Naive thymus-derived CD4-positive, alpha-beta T cell (primary cell): ENCODE measurements at regions of chrX and their contacts with region 1.

Region 1: GRCh38 chrX:72126539-72127140 is 5.1 kb downstream of the RTL5 start:
- DNase-seq: peak; percentile 56 to 83 (median 67)
- ATAC-seq: peak; percentile 87
- H3K4me3 ChIP-seq: no peak overlapping the region
- H3K4me3 Mint-ChIP-seq: no peak overlapping the region
- H3K27ac ChIP-seq: no peak overlapping the region
- H3K27ac Mint-ChIP-seq: no peak overlapping the region
- H3K4me1 ChIP-seq: peaks cover 3 to 42% of the 10 kb centered on the region in 2 donors
- H3K4me1 Mint-ChIP-seq: peaks cover 0 to 34% (median 3%) of the 10 kb centered on the region in 7 donors
- H3K27me3 ChIP-seq: no peaks in the 10 kb centered on the region
- H3K27me3 Mint-ChIP-seq: peaks cover 0 to 63% (median 7%) of the 10 kb centered on the region in 5 donors

Region 2: DNA sequence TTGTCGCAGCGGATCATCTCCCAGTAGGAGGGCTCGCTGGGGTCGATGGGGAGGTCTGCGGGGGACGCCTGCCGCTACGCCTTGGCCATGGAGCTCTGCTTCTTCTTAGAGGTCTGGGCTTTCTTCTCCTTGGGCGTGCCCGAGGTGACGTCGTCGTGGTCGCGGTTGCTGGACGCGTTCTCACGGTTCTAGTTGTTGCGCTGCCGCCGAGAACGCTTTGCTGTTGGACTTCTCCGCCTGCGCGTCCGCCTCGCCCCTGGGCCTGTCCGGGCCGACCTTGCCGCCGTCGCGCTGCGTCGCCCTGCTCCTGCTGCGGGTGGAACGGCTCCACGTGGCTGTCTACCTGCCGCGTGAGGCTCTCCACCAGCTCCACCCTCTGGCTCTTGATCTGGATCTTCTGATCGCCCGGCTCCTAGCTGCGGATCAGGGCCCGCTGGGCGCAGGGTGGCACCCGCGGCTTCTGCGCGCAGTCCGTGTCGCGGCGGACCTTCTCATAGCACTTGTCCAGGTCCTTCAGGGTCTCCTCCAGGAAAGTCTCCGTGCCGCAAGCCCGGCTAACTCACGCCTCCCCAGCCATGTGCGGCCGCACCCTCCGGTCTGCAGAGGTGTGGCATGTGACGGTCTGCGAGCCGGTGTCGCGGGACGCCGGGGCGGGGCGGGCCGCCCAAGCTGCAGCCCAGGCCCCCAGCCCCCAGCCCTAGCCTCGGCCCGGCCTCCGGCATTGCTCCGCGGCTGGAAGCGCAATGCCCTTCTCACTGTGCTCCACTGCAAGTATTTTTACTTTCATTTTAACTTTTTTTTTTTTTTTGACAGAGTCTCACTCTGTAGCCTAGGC is 634.2 kb before region 1 on chrX:
- CTCF ChIA-PET with region 1: no interaction called
- POLR2A ChIA-PET with region 1: no interaction called
- intact Hi-C with region 1: no loop called
- DNase-seq: peak; percentile 16 to 53 (median 43)
- ATAC-seq: peak; percentile 86
- H3K4me3 ChIP-seq: peak overlapping the region; percentile 68
- H3K4me3 Mint-ChIP-seq: peak overlapping the region; percentile 79 to 88 (median 84)
- H3K27ac ChIP-seq: peak overlapping the region; percentile 55
- H3K27ac Mint-ChIP-seq: peak overlapping the region in 8 of 9 donors; percentile 43 to 81 (median 56)
- H3K4me1 ChIP-seq: no peaks in the 10 kb centered on the region
- H3K4me1 Mint-ChIP-seq: peaks cover 4 to 17% (median 11%) of the 10 kb centered on the region in 7 donors
- H3K27me3 ChIP-seq: no peaks in the 10 kb centered on the region
- H3K27me3 Mint-ChIP-seq: peaks cover 0 to 2% (median 0%) of the 10 kb centered on the region in 5 donors

Region 3: DNA sequence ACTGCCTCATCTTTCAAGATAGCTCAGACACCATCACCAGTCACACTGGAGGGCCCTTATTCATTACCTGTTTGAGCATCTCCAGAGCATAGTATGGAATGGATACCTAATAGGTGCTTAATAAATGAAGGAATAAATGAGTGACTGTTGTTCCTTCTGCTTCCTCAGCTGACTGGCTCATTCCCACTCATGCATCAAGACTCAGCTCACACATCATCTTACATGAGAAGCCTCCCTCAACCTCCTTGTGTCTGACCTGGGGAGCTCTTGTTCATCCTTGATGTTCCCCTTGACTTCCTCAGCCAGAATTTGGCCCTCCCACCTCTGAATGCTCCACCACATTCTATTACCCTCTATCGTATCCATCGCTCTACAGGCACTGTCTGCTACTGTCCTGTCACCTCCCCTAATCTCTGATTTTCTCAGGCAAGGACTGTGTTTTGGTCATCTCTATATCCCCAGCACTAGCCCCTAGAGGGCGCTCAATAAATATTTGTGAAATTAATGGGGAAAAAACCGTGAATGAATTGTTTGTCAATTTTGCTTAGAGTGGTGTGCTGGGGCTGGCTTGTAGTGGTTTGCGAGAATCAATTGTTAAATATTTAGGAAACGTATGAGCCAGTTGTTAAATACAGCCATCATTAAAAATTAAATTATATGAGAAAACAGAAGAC is 127.7 kb before region 1 on chrX:
- CTCF ChIA-PET with region 1: interaction called, 24 read pairs
- POLR2A ChIA-PET with region 1: no interaction called
- intact Hi-C with region 1: loop called (anchors 1 kb)
- DNase-seq: peak in 4 of 9 donors; percentile 20 to 39 (median 24)
- ATAC-seq: peak; percentile 63
- H3K4me3 ChIP-seq: no peak overlapping the region
- H3K4me3 Mint-ChIP-seq: no peak overlapping the region
- H3K27ac ChIP-seq: no peak overlapping the region
- H3K27ac Mint-ChIP-seq: no peak overlapping the region
- H3K4me1 ChIP-seq: peaks cover 0 to 2% of the 10 kb centered on the region in 2 donors
- H3K4me1 Mint-ChIP-seq: peaks cover 0 to 10% (median 0%) of the 10 kb centered on the region in 7 donors
- H3K27me3 ChIP-seq: no peaks in the 10 kb centered on the region
- H3K27me3 Mint-ChIP-seq: peaks cover 0 to 26% (median 0%) of the 10 kb centered on the region in 5 donors

Region 4: GRCh38 chrX:72018277-72019112 is 108.1 kb before region 1 on chrX:
- CTCF ChIA-PET with region 1: interaction called, 13 read pairs
- POLR2A ChIA-PET with region 1: no interaction called
- intact Hi-C with region 1: loop called (anchors 1 kb)
- DNase-seq: peak; percentile 41 to 83 (median 69)
- ATAC-seq: peak; percentile 98
- H3K4me3 ChIP-seq: peak overlapping the region; percentile 24
- H3K4me3 Mint-ChIP-seq: peak overlapping the region in 6 of 10 donors; percentile 17 to 51 (median 20)
- H3K27ac ChIP-seq: no peak overlapping the region
- H3K27ac Mint-ChIP-seq: no peak overlapping the region
- H3K4me1 ChIP-seq: peaks cover 0 to 5% of the 10 kb centered on the region in 2 donors
- H3K4me1 Mint-ChIP-seq: peaks cover 0 to 14% (median 0%) of the 10 kb centered on the region in 7 donors
- H3K27me3 ChIP-seq: no peaks in the 10 kb centered on the region
- H3K27me3 Mint-ChIP-seq: peaks cover 2 to 70% (median 3%) of the 10 kb centered on the region in 5 donors

Region 5: GRCh38 chrX:72048968-72049367 is 77.7 kb before region 1 on chrX:
- CTCF ChIA-PET with region 1: no interaction called
- POLR2A ChIA-PET with region 1: no interaction called
- intact Hi-C with region 1: loop called (anchors 1 kb)
- DNase-seq: peak in 1 of 9 donors; percentile 7
- ATAC-seq: no peak
- H3K4me3 ChIP-seq: no peak overlapping the region
- H3K4me3 Mint-ChIP-seq: no peak overlapping the region
- H3K27ac ChIP-seq: no peak overlapping the region
- H3K27ac Mint-ChIP-seq: no peak overlapping the region
- H3K4me1 ChIP-seq: peaks cover 0 to 14% of the 10 kb centered on the region in 2 donors
- H3K4me1 Mint-ChIP-seq: peaks cover 0 to 13% (median 10%) of the 10 kb centered on the region in 7 donors
- H3K27me3 ChIP-seq: no peaks in the 10 kb centered on the region
- H3K27me3 Mint-ChIP-seq: peaks cover 0 to 37% (median 0%) of the 10 kb centered on the region in 5 donors

Region 6: DNA sequence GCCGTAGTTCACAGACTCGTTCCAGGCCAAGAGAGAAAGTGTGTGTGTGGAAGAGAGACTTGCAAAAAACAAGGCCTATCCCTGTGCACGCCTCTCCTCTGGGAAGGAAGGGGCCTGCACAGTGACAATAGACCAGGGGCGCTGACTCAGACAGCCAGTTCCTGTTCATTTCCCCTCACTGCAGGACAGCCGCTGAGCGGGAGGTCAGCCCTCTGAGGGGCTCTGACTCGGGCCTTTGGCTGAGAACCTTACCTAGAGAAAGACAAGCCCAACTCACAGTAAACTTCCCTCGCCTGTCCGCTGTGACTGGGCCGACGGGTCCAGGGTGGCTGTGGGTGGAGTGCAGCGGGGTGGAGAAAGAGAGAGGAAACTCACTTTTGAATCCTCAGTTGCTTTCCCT is 47.0 kb before region 1 on chrX:
- CTCF ChIA-PET with region 1: no interaction called
- POLR2A ChIA-PET with region 1: no interaction called
- intact Hi-C with region 1: loop called in 1 of 2 experiments (anchors 10 kb)
- DNase-seq: no peak
- ATAC-seq: peak; percentile 34
- H3K4me3 ChIP-seq: no peak overlapping the region
- H3K4me3 Mint-ChIP-seq: no peak overlapping the region
- H3K27ac ChIP-seq: no peak overlapping the region
- H3K27ac Mint-ChIP-seq: no peak overlapping the region
- H3K4me1 ChIP-seq: peaks cover 0 to 11% of the 10 kb centered on the region in 2 donors
- H3K4me1 Mint-ChIP-seq: peaks cover 0 to 20% (median 10%) of the 10 kb centered on the region in 7 donors
- H3K27me3 ChIP-seq: no peaks in the 10 kb centered on the region
- H3K27me3 Mint-ChIP-seq: peaks cover 0 to 41% (median 0%) of the 10 kb centered on the region in 5 donors

Region 7: GRCh38 chrX:72100824-72101351 is 25.8 kb before region 1 on chrX:
- CTCF ChIA-PET with region 1: interaction called, 4 read pairs
- POLR2A ChIA-PET with region 1: no interaction called
- intact Hi-C with region 1: loop called (anchors 1 to 2 kb)
- DNase-seq: peak; percentile 24 to 78 (median 67)
- ATAC-seq: peak; percentile 84
- H3K4me3 ChIP-seq: peak overlapping the region; percentile 59
- H3K4me3 Mint-ChIP-seq: peak overlapping the region; percentile 25 to 81 (median 64)
- H3K27ac ChIP-seq: no peak overlapping the region
- H3K27ac Mint-ChIP-seq: peak overlapping the region in 6 of 9 donors; percentile 14 to 82 (median 58)
- H3K4me1 ChIP-seq: peaks cover 29 to 50% of the 10 kb centered on the region in 2 donors
- H3K4me1 Mint-ChIP-seq: peaks cover 10 to 39% (median 33%) of the 10 kb centered on the region in 7 donors
- H3K27me3 ChIP-seq: no peaks in the 10 kb centered on the region
- H3K27me3 Mint-ChIP-seq: peaks cover 6 to 60% (median 12%) of the 10 kb centered on the region in 5 donors

Region 8: DNA sequence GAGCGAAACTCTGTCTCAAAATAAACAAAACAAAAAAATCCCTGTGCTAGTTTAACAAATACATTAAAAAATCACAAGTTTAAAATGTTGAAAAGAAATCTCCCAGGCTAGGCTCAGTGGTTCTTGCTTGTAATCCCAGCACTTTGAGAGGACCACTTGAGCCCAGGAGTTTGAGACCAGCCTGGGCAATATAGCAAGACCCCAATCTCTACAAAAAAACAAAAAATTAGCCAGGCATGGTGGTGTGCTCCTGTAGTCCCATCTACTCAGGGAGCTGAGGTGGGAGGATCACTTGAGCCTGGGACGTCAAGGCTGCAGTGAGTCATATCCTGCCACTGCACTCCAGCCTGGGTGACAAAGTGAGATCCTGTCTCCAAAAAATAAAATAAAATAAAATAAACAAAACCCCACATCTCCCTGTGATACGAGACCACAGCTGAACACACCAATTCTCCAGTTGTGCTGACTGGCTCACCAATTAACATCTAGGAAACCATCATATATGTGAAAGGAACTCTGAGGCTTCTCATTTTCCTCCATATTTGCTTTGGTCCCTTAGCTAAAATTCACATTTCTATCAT is 143.1 kb after region 1 on chrX:
- CTCF ChIA-PET with region 1: no interaction called
- POLR2A ChIA-PET with region 1: no interaction called
- intact Hi-C with region 1: loop called in 1 of 2 experiments (anchors 10 kb)
- DNase-seq: no peak
- ATAC-seq: no peak
- H3K4me3 ChIP-seq: no peak overlapping the region
- H3K4me3 Mint-ChIP-seq: no peak overlapping the region
- H3K27ac ChIP-seq: no peak overlapping the region
- H3K27ac Mint-ChIP-seq: peak overlapping the region in 3 of 9 donors; percentile 33 to 78 (median 38)
- H3K4me1 ChIP-seq: peaks cover 6 to 17% of the 10 kb centered on the region in 2 donors
- H3K4me1 Mint-ChIP-seq: peaks cover 10 to 41% (median 24%) of the 10 kb centered on the region in 7 donors
- H3K27me3 ChIP-seq: no peaks in the 10 kb centered on the region
- H3K27me3 Mint-ChIP-seq: no peaks in the 10 kb centered on the region